Endothelial cell of umbilical vein (primary cell): ENCODE measurements at regions of chr1 and their contacts with region 1.

Region 1: GRCh38 chr1:171781176-171781875 is at the start of gene METTL13:
- DNase-seq: peak; percentile 100
- H3K4me3 ChIP-seq: peak within 1 kb of the TSS; percentile 69 to 85 (median 81)
- H3K27ac ChIP-seq: peak within 1 kb of the TSS; percentile 66
- H3K4me1 ChIP-seq: peaks cover 7% of the 10 kb centered on the region
- H3K27me3 ChIP-seq: peaks cover 0 to 1% of the 10 kb centered on the region in 2 experiments
- CTCF ChIP-seq: no peak
- POLR2A ChIP-seq: peak; percentile 65
- total RNA-seq, gene METTL13: 26.5 and 29.7 TPM in 2 replicates

Region 2: GRCh38 chr1:171727778-171728177 is 53.5 kb before region 1 on chr1:
- CTCF ChIA-PET with region 1: no interaction called
- POLR2A ChIA-PET with region 1: no interaction called
- dilution Hi-C with region 1: no loop called
- intact Hi-C with region 1: no loop called
- DNase-seq: no peak
- H3K4me3 ChIP-seq: no peak overlapping the region
- H3K27ac ChIP-seq: no peak overlapping the region
- H3K4me1 ChIP-seq: peaks cover 6% of the 10 kb centered on the region
- H3K27me3 ChIP-seq: no peaks in the 10 kb centered on the region
- CTCF ChIP-seq: no peak
- POLR2A ChIP-seq: no peak

Region 3: GRCh38 chr1:171741872-171742576 is 39.3 kb before region 1 on chr1 and contains the start of gene VAMP4:
- CTCF ChIA-PET with region 1: interaction called, 8 read pairs
- POLR2A ChIA-PET with region 1: interaction called, 3 read pairs
- dilution Hi-C with region 1: no loop called
- intact Hi-C with region 1: loop called (anchors 1 kb)
- DNase-seq: peak; percentile 87
- H3K4me3 ChIP-seq: peak within 1 kb of the TSS; percentile 59 to 83 (median 81)
- H3K27ac ChIP-seq: peak within 1 kb of the TSS; percentile 57
- H3K4me1 ChIP-seq: peaks cover 31% of the 10 kb centered on the region
- H3K27me3 ChIP-seq: no peaks in the 10 kb centered on the region
- CTCF ChIP-seq: no peak
- POLR2A ChIP-seq: peak; percentile 60
- total RNA-seq, gene VAMP4: 10.1 and 10.4 TPM in 2 replicates